Astrocyte of the cerebellum (primary cell): ENCODE measurements at regions of chr11 and their contacts with region 1.

Region 1: DNA sequence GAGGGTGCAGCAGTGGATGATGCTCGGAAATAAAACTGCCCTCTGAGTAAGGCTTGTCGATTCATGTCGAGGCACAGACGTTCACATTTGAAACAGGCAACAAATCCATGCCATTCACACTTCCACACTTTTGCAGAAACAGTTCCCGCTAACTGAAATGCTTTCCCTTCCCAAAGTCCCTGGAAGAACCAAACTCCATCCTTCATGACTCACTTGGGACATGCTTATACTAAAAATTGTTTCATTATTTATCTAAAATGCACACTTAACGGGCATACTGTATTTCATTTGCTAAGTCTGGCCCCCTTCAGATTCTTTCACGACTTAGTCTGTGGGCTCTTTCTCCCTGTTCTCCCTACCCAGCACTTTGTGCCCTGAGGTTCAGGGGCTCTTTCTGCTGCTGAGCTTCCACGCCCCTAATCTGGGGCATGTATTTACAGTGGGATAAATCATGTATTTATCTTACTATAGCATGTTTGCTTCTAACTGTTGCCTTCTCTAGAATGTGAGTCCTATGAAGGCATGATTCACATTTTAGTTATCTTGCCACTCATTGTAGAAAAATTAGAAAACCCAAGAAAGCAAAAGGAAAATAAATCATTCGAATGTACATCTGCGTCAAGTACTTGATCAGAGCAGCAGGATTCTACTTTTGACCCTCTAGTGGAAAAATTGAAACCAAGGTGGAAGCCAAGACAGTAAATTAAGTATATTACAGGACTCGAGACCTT is 12.5 kb downstream of the SCGB1A1 start:
- DNase-seq: no peak
- H3K4me3 ChIP-seq: no peak overlapping the region
- CTCF ChIP-seq: no peak

Region 2: DNA sequence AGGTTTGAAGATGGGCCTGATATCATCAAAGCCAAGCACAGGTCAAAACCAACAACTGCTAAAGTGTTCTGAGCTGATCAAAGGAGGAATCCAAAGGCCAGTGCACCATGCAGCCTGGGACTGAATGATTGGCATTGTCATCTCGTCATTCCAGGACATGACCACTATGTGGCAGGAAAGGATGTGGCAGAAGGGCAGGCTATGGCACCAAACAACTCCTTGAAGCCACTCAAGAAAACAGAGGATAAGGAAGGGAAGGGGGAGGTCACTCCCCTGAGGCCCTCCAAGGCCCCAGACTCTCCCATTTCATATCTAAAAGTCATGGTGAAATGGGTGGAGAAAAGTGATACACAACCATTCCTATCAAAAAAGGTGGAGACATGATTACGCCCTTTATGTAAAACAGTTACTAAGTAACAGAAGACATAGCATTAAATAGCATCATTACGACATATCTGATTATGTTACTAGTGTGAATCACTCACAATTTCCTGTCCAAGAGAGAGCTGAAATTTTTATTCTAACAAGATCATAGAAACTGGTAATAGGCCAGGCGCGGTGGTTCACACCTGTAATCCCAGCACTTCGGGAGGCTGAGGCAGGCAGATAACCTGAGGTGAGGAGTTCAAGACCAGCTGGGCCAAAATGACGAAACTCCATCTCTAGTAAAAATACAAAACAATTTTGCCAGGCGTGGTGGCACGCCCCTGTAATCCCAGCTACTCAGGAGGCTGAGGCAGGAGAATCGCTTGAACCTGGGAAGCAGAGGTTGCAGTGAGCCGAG is 66.0 kb after region 1 on chr11:
- in situ Hi-C with region 1: loop called (anchors 5 kb)
- DNase-seq: no peak
- H3K4me3 ChIP-seq: no peak overlapping the region
- CTCF ChIP-seq: no peak

Region 3: GRCh38 chr11:62591448-62592145 is 160.3 kb after region 1 on chr11 and contains the start of gene TUT1:
- in situ Hi-C with region 1: no loop called
- DNase-seq: peak; percentile 99
- H3K4me3 ChIP-seq: peak within 1 kb of the TSS; percentile 79
- CTCF ChIP-seq: no peak